ENCODE measurements at regions of chr12 and their contacts with region 1.

Region 1: GRCh38 chr12:123580772-123581171 is 3.6 kb upstream of the TMED2 start:
- DNase-seq: no peak
- ATAC-seq: no peak
- H3K4me3 ChIP-seq: no peak overlapping the region
- H3K4me3 Mint-ChIP-seq: no peak overlapping the region
- H3K27ac ChIP-seq: no peak overlapping the region
- H3K27ac Mint-ChIP-seq: no peak overlapping the region
- H3K4me1 ChIP-seq: peaks cover 22% of the 10 kb centered on the region
- H3K4me1 Mint-ChIP-seq: peaks cover 28% of the 10 kb centered on the region
- H3K27me3 ChIP-seq: no peaks in the 10 kb centered on the region
- H3K27me3 Mint-ChIP-seq: no peaks in the 10 kb centered on the region
- CTCF ChIP-seq: no peak

Region 2: GRCh38 chr12:122974274-122974891 is 606.4 kb before region 1 on chr12:
- CTCF ChIA-PET with region 1: no interaction called
- POLR2A ChIA-PET with region 1: interaction called, 3 read pairs
- intact Hi-C with region 1: loop called in 1 of 2 experiments (anchors 5 kb)
- DNase-seq: peak; percentile 97 to 100 (median 99)
- ATAC-seq: peak; percentile 85
- H3K4me3 ChIP-seq: peak overlapping the region; percentile 91 to 93
- H3K4me3 Mint-ChIP-seq: peak overlapping the region; percentile 98
- H3K27ac ChIP-seq: peak overlapping the region; percentile 93 to 97
- H3K27ac Mint-ChIP-seq: peak overlapping the region; percentile 98
- H3K4me1 ChIP-seq: peaks cover 26% of the 10 kb centered on the region
- H3K4me1 Mint-ChIP-seq: peaks cover 31% of the 10 kb centered on the region
- H3K27me3 ChIP-seq: no peaks in the 10 kb centered on the region
- H3K27me3 Mint-ChIP-seq: no peaks in the 10 kb centered on the region
- CTCF ChIP-seq: no peak

Region 3: GRCh38 chr12:123271001-123271729 is 309.6 kb before region 1 on chr12:
- CTCF ChIA-PET with region 1: interaction called, 14 read pairs
- POLR2A ChIA-PET with region 1: interaction called, 5 read pairs
- intact Hi-C with region 1: loop called (anchors 1 kb)
- DNase-seq: peak; percentile 48 to 83 (median 74)
- ATAC-seq: peak; percentile 86
- H3K4me3 ChIP-seq: peak overlapping the region in 1 of 2 experiments; percentile 49
- H3K4me3 Mint-ChIP-seq: no peak overlapping the region
- H3K27ac ChIP-seq: no peak overlapping the region
- H3K27ac Mint-ChIP-seq: no peak overlapping the region
- H3K4me1 ChIP-seq: peaks cover 26% of the 10 kb centered on the region
- H3K4me1 Mint-ChIP-seq: peaks cover 32% of the 10 kb centered on the region
- H3K27me3 ChIP-seq: no peaks in the 10 kb centered on the region
- H3K27me3 Mint-ChIP-seq: no peaks in the 10 kb centered on the region
- CTCF ChIP-seq: no peak

Region 4: DNA sequence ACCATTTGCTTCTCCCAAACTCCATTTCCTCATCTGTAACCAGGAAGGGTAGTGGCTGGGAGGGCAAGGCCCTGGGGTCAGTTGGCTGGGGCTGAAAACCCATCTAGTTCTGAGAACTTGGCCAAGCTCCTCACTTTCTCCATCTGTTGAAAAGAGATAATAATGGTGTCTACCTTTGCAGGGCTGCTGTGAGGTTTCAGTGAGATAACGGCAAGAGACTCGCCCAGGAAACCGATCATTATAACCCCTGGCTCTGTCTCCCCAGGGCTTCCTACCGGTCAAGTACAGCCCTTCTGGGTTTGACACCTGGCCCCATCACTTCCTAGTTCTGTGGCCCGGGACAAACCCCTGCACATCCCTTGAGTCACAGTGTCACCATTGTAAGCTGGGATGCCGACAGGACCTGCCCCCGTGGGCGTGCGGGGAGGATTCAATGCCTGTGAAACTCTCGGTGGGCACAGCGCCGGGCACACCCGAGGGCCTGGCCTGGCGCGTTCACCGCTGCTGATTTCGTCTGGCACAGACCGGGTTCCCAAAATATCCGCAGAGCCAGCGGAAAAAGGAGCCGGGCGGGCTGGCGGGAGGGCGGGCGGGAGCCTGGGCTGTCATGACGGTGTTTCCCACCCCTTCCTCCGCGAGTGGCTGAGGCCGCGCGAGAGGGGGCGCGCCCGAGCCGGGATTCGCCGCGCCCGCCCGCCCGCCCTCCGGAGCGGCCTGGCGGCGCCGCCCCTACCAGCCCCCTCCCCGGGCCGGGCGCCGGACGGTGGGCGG is 192.4 kb before region 1 on chr12:
- CTCF ChIA-PET with region 1: no interaction called
- POLR2A ChIA-PET with region 1: interaction called, 4 read pairs
- intact Hi-C with region 1: loop called (anchors 1 kb)
- DNase-seq: peak; percentile 41 to 88 (median 72)
- ATAC-seq: peak; percentile 66
- H3K4me3 ChIP-seq: peak overlapping the region; percentile 42 to 64
- H3K4me3 Mint-ChIP-seq: peak overlapping the region; percentile 88
- H3K27ac ChIP-seq: peak overlapping the region; percentile 33 to 79
- H3K27ac Mint-ChIP-seq: peak overlapping the region; percentile 91
- H3K4me1 ChIP-seq: peaks cover 22% of the 10 kb centered on the region
- H3K4me1 Mint-ChIP-seq: peaks cover 32% of the 10 kb centered on the region
- H3K27me3 ChIP-seq: no peaks in the 10 kb centered on the region
- H3K27me3 Mint-ChIP-seq: no peaks in the 10 kb centered on the region
- CTCF ChIP-seq: no peak

Region 5: GRCh38 chr12:123457980-123458783 is 122.6 kb before region 1 on chr12 and contains the start of gene SNRNP35:
- CTCF ChIA-PET with region 1: interaction called, 6 read pairs
- POLR2A ChIA-PET with region 1: interaction called, 3 read pairs
- intact Hi-C with region 1: loop called (anchors 1 kb)
- DNase-seq: peak; percentile 75 to 94 (median 84)
- ATAC-seq: peak; percentile 78
- H3K4me3 ChIP-seq: peak within 1 kb of the TSS; percentile 96 to 99
- H3K4me3 Mint-ChIP-seq: peak within 1 kb of the TSS; percentile 99
- H3K27ac ChIP-seq: peak within 1 kb of the TSS; percentile 97 to 99
- H3K27ac Mint-ChIP-seq: peak within 1 kb of the TSS; percentile 100
- H3K4me1 ChIP-seq: peaks cover 13% of the 10 kb centered on the region
- H3K4me1 Mint-ChIP-seq: peaks cover 31% of the 10 kb centered on the region
- H3K27me3 ChIP-seq: no peaks in the 10 kb centered on the region
- H3K27me3 Mint-ChIP-seq: no peaks in the 10 kb centered on the region
- CTCF ChIP-seq: no peak
- total RNA-seq, gene SNRNP35: 24.9 to 27.4 TPM

Region 6: GRCh38 chr12:123601602-123602489 is 21.1 kb after region 1 on chr12 and contains the start of gene DDX55:
- CTCF ChIA-PET with region 1: interaction called, 5 read pairs
- POLR2A ChIA-PET with region 1: interaction called, 3 read pairs
- intact Hi-C with region 1: loop called (anchors 1 kb)
- DNase-seq: peak; percentile 71 to 94 (median 87)
- ATAC-seq: peak; percentile 93
- H3K4me3 ChIP-seq: peak within 1 kb of the TSS; percentile 92 to 94
- H3K4me3 Mint-ChIP-seq: peak within 1 kb of the TSS; percentile 98
- H3K27ac ChIP-seq: peak within 1 kb of the TSS; percentile 78 to 89
- H3K27ac Mint-ChIP-seq: peak within 1 kb of the TSS; percentile 94
- H3K4me1 ChIP-seq: peaks cover 16% of the 10 kb centered on the region
- H3K4me1 Mint-ChIP-seq: peaks cover 31% of the 10 kb centered on the region
- H3K27me3 ChIP-seq: no peaks in the 10 kb centered on the region
- H3K27me3 Mint-ChIP-seq: no peaks in the 10 kb centered on the region
- CTCF ChIP-seq: peak; percentile 42
- total RNA-seq, gene DDX55: 41.1 to 44.5 TPM

Region 7: GRCh38 chr12:123713398-123713797 is 132.6 kb after region 1 on chr12:
- CTCF ChIA-PET with region 1: no interaction called
- POLR2A ChIA-PET with region 1: no interaction called
- intact Hi-C with region 1: loop called (anchors 1 kb)
- DNase-seq: peak in 1 of 9 experiments; percentile 21
- ATAC-seq: no peak
- H3K4me3 ChIP-seq: peak overlapping the region; percentile 69 to 98
- H3K4me3 Mint-ChIP-seq: peak overlapping the region; percentile 84
- H3K27ac ChIP-seq: no peak overlapping the region
- H3K27ac Mint-ChIP-seq: peak overlapping the region; percentile 86
- H3K4me1 ChIP-seq: peaks cover 22% of the 10 kb centered on the region
- H3K4me1 Mint-ChIP-seq: peaks cover 45% of the 10 kb centered on the region
- H3K27me3 ChIP-seq: no peaks in the 10 kb centered on the region
- H3K27me3 Mint-ChIP-seq: no peaks in the 10 kb centered on the region
- CTCF ChIP-seq: no peak

Measured in CD8-positive, alpha-beta T cell (primary cell).